ENCODE measurements at regions of chr16 and their contacts with region 1.

Region 1: DNA sequence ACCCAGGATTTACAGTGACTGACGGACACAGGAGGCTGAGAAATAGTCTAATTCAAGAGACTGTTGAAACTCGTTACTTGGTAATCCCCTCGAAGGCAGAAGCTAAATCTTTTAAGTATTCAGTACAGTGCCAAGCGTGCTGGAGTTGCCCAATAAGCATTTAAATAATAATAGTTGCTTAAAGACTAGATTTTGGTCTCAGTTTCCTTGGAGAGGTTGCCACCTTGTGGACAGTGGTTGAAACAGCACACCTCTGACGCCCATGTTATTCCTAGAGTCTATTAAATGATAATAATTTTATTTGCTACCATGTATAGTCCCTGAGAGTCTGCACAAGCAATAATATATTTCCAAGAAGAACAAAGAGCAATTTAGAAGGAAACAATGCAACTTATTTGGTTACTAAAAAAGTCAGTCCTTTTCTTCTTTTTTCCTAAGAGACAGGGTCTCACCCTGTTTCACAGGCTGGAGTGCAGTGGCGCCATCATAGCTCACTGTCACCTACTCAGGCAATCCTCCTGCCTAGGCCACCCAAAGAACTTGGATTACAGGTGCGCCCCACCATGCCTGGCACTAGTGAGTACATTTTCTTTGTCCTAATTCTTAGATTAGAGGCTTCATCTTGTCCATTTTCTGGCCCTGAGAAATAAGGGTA is 138.0 kb upstream of the NUDT7 start:
- DNase-seq: peak; percentile 89
- H3K4me3 ChIP-seq: no peak overlapping the region
- H3K27ac ChIP-seq: peak overlapping the region; percentile 99
- H3K4me1 ChIP-seq: peaks cover 57% of the 10 kb centered on the region
- H3K27me3 ChIP-seq: no peaks in the 10 kb centered on the region
- CTCF ChIP-seq: peak; percentile 69 to 73
- POLR2A ChIP-seq: no peak

Region 2: GRCh38 chr16:77236063-77236511 is 348.2 kb before region 1 on chr16:
- CTCF ChIA-PET with region 1: interaction called, 185 read pairs
- POLR2A ChIA-PET with region 1: interaction called, 3 read pairs
- dilution Hi-C with region 1: loop called (anchors 25 kb)
- intact Hi-C with region 1: loop called (anchors 1 kb)
- DNase-seq: peak; percentile 87
- H3K4me3 ChIP-seq: no peak overlapping the region
- H3K27ac ChIP-seq: no peak overlapping the region
- H3K4me1 ChIP-seq: no peaks in the 10 kb centered on the region
- H3K27me3 ChIP-seq: no peaks in the 10 kb centered on the region
- CTCF ChIP-seq: peak; percentile 99 to 100
- POLR2A ChIP-seq: no peak

Region 3: DNA sequence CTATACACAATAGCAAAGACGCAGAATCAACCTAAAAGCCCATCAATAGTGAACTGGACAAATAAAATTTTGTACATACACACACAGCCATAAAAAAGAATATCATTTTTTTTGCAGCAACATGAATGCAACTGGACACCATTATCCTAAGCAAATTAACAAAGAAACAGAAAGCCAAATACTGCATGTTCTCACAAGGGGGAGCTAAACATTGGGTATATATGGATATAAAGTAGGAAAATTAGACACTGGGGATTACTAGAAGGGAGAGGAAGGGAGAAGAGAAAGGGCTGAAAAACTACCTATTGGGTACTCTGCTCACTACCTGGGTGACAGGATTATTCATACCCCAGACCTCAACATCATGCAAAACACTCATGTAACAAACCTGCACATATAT is 177.7 kb before region 1 on chr16:
- CTCF ChIA-PET with region 1: interaction called, 31 read pairs
- POLR2A ChIA-PET with region 1: no interaction called
- dilution Hi-C with region 1: no loop called
- intact Hi-C with region 1: loop called (anchors 1 kb)
- DNase-seq: peak; percentile 32
- H3K4me3 ChIP-seq: no peak overlapping the region
- H3K27ac ChIP-seq: no peak overlapping the region
- H3K4me1 ChIP-seq: peaks cover 25% of the 10 kb centered on the region
- H3K27me3 ChIP-seq: no peaks in the 10 kb centered on the region
- CTCF ChIP-seq: peak; percentile 26 to 28
- POLR2A ChIP-seq: no peak

Region 4: GRCh38 chr16:77468831-77469230 is 115.5 kb before region 1 on chr16:
- CTCF ChIA-PET with region 1: no interaction called
- POLR2A ChIA-PET with region 1: no interaction called
- dilution Hi-C with region 1: no loop called
- intact Hi-C with region 1: no loop called
- DNase-seq: peak; percentile 64
- H3K4me3 ChIP-seq: no peak overlapping the region
- H3K27ac ChIP-seq: no peak overlapping the region
- H3K4me1 ChIP-seq: peaks cover 2% of the 10 kb centered on the region
- H3K27me3 ChIP-seq: no peaks in the 10 kb centered on the region
- CTCF ChIP-seq: no peak
- POLR2A ChIP-seq: no peak

Region 5: GRCh38 chr16:77499373-77500285 is 84.7 kb before region 1 on chr16:
- CTCF ChIA-PET with region 1: no interaction called
- POLR2A ChIA-PET with region 1: no interaction called
- dilution Hi-C with region 1: no loop called
- intact Hi-C with region 1: loop called (anchors 1 kb)
- DNase-seq: peak; percentile 91
- H3K4me3 ChIP-seq: no peak overlapping the region
- H3K27ac ChIP-seq: peak overlapping the region; percentile 21
- H3K4me1 ChIP-seq: peaks cover 23% of the 10 kb centered on the region
- H3K27me3 ChIP-seq: no peaks in the 10 kb centered on the region
- CTCF ChIP-seq: no peak
- POLR2A ChIP-seq: no peak

Region 6: DNA sequence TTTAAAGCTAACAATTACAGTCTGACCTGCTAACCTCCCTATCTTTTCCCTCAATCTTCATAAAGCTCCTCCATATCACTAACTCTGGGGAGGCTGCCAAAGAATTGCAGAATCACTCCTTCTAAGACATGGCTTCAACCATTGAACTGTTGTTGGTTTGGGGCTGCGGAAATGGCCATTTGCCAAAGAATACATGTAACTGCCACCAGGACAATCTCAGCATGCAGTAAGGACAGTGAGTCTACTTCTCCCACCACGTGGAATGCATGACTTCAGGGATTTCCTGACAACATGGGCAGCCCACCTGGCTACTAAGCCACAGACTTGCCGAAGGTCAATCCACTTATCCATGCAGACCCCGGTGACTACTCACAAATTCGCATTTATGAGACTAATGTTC is 33.7 kb after region 1 on chr16:
- CTCF ChIA-PET with region 1: interaction called, 3 read pairs
- POLR2A ChIA-PET with region 1: no interaction called
- dilution Hi-C with region 1: no loop called
- intact Hi-C with region 1: loop called (anchors 1 kb)
- DNase-seq: peak; percentile 85
- H3K4me3 ChIP-seq: no peak overlapping the region
- H3K27ac ChIP-seq: peak overlapping the region; percentile 35
- H3K4me1 ChIP-seq: peaks cover 17% of the 10 kb centered on the region
- H3K27me3 ChIP-seq: no peaks in the 10 kb centered on the region
- CTCF ChIP-seq: no peak
- POLR2A ChIP-seq: peak; percentile 21

Region 7: DNA sequence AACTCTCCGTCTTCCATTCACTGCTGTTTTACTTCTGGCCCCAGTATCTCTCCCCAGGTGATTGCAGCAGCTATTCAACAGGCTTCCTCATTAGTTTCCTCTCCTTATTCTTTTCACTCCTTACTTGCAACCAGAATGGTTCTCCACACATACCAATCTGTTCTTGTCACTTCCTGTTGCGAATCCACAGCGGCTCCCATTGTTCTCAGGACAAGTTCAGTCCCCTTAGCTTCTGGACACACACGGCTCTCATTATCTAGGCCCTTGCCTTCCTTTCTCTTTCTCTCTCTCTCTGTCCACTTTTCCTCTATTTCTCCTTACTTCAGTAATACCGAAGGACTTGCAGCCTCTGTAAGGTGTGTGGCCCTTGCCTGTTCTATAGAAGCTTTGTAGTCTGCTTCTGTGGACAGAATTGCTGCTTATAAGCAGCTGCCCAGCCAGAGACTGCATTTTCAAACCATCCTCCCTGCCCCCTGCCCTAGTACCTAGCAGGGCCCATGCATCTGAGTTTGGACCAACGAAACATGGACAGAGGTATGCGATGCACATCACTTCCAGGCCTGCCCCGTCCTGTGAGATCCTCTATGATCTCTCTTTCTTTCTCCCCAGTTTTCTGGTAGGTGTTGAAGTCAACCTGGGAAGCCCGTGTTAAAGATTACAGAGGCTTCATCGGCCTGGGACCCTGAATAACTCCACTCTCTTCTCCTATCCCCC is 249.7 kb after region 1 on chr16:
- CTCF ChIA-PET with region 1: no interaction called
- POLR2A ChIA-PET with region 1: no interaction called
- dilution Hi-C with region 1: no loop called
- intact Hi-C with region 1: loop called (anchors 2 kb)
- DNase-seq: peak; percentile 89
- H3K4me3 ChIP-seq: no peak overlapping the region
- H3K27ac ChIP-seq: peak overlapping the region; percentile 99
- H3K4me1 ChIP-seq: peaks cover 14% of the 10 kb centered on the region
- H3K27me3 ChIP-seq: no peaks in the 10 kb centered on the region
- CTCF ChIP-seq: no peak
- POLR2A ChIP-seq: peak; percentile 53

Measured in endothelial cell of umbilical vein (primary cell).